ENCODE measurements at regions of chr17 and their contacts with region 1.

Region 1: DNA sequence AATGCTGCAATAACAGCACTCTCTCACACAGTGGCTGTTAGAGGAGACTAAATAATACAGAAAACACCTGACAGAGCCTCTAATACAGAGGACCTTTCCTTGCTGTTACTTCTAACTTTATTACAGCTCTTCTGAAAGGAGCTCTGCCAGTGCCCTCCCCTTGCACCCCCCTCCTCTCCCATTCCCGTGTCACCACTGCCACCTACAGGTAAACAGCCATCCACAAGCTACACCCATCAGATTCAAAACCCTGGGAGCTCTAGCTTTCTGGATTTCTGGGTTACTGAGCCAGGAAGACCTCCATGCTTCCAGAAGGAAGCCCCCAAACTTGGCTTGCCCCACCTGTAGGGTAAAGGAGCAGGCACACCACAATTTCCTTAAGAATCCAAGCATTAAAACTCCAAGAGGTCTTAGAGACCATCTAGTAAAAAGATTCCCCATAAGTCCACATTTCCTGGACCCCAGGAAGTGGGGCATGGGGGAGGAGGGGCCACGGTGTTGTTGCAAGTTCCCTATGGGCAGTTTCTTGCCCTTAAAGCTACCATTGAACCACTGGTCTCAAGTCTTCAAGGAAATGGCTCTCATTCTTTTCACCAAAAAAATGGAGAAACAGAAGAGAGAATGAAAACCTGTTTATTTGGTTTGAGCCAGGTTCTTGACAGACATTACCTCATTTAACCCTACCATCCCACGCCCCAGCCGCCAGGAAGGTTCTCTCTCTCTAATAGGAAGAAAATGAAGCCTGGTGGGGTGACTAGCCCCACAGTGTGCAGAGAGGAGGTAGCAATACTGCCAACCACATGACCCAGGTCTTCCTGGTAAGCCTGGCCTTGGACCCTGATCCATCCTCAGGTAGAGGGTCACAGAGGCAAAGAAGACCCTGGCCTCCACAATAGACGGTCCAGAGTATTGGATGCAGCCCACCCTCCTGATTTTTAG is 52.8 kb downstream of the TOM1L2 start:
- H3K4me3 ChIP-seq: no peak overlapping the region
- H3K27ac ChIP-seq: peak overlapping the region; percentile 35; the same call in 1 of the 2 replicates
- H3K4me1 ChIP-seq: peaks cover 34% of the 10 kb centered on the region
- CTCF ChIP-seq: peak; percentile 85

Region 2: DNA sequence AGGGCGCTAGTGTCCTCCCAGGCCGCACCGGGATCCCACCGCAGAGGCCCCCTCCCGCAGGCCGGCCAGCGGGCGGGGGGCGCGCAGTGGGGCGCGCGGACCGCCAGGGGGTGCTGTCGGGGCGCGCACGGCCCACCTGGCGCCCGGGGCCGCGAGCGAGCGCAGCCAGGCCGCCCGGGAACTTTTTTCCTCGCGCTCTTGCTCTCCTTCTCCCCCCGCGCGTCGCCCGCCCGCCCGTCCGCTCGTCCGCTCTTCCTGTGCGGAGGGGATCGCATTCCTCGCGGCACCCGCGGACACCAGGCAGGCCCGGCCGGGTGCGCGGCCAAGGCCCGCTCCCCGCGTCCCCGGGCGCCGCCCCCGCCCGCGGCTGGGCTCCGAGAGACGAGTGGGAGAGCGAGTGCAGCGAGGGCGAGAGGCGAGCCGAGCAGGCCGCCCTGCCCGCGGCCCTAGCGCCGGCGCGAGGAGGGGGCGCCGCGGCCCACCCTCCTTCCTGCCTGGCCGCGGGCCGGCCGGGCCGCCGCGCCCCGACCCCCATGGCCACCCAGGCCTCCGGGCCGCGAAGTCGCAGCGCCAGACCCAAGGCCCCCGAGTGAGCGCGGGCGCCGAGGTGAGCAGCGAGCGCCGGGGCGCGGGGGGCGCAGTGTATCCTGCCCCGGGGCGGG is 238.1 kb before region 1 on chr17 and contains the start of gene RAI1:
- CTCF ChIA-PET with region 1: interaction called, 16 read pairs
- POLR2A ChIA-PET with region 1: no interaction called
- H3K4me3 ChIP-seq: peak within 1 kb of the TSS; percentile 76
- H3K27ac ChIP-seq: peak within 1 kb of the TSS; percentile 96
- H3K4me1 ChIP-seq: peaks cover 25% of the 10 kb centered on the region
- CTCF ChIP-seq: no peak

Region 3: GRCh38 chr17:17712268-17712924 is 207.0 kb before region 1 on chr17:
- CTCF ChIA-PET with region 1: no interaction called
- POLR2A ChIA-PET with region 1: no interaction called
- H3K4me3 ChIP-seq: no peak overlapping the region
- H3K27ac ChIP-seq: peak overlapping the region; percentile 41; the same call in 1 of the 2 replicates
- H3K4me1 ChIP-seq: peaks cover 32% of the 10 kb centered on the region
- CTCF ChIP-seq: no peak

Region 4: DNA sequence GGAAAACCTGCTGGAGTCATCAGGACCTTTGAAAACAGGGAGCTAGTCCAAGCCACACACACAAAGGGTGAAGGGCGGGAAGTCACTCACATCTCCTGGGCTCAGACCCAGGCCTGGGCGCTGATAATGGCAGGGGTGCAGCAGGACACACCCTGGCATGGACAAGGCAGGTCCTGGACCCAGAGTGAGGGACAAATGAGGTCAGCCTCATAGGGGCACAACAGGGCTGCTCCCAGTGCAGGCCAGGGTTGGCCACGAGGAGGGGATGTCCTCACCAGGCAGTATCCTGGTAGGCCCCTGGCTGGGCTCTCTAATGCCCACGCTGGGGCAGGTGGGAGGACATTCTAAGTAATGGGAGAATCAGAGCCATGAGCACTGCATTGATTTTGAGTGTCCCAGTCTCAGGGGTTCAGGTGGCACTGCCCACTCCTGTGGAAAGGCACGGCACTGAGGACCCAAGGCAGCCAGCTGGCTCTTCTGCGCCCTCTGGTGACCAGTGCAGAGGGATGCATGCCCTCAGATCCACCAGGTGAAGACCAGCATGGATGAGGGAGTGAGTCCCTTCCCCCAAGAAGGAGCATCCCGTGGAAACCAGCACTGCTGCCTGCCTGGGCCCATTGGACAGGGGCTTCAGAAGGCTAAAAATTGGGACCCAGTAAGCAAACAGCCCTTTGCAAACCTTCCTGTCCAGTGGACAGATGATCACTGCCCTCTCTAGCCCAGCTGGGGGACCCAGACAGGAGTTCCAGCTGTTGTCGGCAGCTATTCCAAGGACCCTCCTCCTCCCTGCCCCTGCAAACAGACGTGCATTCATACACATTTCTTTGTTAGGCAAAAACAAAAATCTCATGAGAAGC is 59.3 kb before region 1 on chr17:
- CTCF ChIA-PET with region 1: interaction called, 40 read pairs
- POLR2A ChIA-PET with region 1: interaction called, 3 read pairs
- H3K4me3 ChIP-seq: no peak overlapping the region
- H3K27ac ChIP-seq: no peak overlapping the region
- H3K4me1 ChIP-seq: no peaks in the 10 kb centered on the region; the same call in 1 of the 2 replicates
- CTCF ChIP-seq: peak; percentile 97

Region 5: DNA sequence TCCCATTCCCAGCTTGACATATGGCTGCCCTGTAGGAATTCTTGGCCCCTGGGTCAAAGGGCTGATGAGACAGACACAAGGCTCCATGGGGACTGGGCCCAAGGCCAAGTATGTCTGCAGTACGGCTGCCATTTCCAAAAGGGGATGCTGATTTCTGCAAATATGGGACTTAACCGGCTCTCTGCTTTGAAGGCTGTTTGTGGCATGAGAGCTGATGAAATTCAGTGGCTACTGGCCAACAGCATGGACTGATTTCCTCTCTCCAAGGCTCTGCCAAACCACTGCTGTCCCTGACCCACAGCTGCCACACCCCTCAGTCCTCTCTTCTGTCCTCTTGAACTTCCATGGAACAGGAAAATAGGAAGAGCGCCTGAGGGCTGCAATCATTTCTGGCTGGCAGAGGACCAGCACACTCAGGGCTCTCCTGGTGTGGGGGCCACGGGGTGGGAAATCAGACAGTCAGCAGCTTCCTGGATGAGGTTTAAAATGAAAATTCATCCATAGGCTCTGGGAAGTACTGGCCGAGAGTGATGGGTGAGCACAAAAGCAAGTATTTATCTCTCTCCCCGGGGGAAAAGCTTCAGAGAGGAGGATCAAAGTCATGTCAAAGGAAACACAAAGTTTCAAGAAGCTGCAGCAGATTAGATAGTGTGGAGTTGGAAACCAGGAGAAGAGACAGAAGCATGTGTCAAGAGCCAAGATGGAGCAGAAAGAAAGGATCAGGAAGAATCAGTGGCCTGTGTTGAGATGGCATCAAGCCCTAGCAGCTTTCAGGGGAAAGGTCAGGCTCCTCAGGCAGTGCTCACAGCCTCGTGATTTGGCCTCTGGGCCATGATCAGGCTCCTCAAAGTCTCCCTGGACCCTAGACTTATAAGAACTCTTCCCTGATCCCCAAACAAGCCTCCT is 18.6 kb before region 1 on chr17:
- CTCF ChIA-PET with region 1: interaction called, 121 read pairs
- POLR2A ChIA-PET with region 1: interaction called, 8 read pairs
- H3K4me3 ChIP-seq: no peak overlapping the region
- H3K27ac ChIP-seq: 0 out of 2 replicates have a peak overlapping the region, but pooled peaks have one; percentile 14
- H3K4me1 ChIP-seq: 0 out of 2 replicates have a peak, but pooled peaks cover 5% of the 10 kb centered on the region
- CTCF ChIP-seq: no peak

Region 6: DNA sequence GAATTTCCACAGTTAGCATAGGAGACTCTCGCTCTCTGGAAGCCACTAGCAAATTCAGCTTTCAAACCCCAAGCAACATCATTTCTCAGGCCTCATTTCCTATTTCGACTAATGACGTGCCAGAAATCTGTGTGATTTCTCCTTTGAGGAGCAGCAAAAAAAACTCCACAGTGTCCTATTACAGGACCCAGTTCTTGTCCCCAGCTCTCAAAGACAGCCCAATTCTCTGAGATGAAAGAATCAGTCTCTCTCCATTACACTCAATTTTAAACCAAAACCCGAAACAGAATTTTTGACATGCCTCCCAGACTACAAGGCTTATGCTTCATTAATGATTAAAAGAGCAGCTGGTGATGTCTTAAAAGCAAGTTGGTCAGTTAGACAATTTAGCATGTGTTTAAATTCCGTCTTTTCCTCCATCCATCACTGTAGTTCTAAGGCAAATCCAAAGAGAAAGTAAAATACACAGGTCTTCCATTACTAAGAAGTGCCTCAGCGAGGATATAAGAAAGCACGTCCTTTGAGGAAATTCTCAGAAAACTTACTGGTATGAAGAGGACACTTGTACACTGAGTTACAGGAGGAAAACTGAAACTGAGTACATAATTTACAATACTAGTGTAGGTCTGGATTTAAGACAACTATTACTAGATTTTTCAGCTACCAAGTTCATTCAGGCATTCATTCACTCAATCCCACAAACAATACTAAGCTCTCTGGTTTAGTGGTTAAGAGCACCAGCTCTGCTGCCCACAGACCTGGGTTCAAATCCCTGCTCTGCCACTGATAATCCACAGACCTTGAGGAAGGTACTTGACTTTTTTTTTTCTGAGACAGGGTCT is 40.3 kb after region 1 on chr17:
- CTCF ChIA-PET with region 1: interaction called, 11 read pairs
- POLR2A ChIA-PET with region 1: interaction called, 5 read pairs
- H3K4me3 ChIP-seq: no peak overlapping the region
- H3K27ac ChIP-seq: peak overlapping the region; percentile 81
- H3K4me1 ChIP-seq: peaks cover 32% of the 10 kb centered on the region
- CTCF ChIP-seq: no peak

Region 7: DNA sequence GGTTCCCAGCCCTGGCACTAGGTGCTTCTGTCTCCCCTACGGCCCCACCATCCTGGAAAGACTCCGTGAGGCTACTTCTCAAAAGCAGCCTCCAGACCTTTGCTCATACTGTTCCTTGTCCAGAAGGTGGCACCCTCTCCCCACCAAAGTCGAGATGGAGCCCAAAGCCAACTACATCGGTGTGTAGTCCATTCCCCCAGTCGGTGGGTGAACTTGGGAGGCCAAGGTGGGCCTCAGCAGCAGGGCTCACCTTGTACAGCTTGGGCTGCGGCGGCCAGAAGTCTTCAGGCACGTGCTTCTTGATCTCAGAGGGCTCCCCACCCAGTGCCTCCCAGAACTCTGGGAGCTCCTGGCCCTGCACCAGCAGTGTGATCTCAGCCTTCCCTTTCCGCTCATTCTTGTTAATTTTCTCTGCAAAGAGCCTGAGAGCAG is 328.9 kb after region 1 on chr17:
- CTCF ChIA-PET with region 1: no interaction called
- POLR2A ChIA-PET with region 1: no interaction called
- H3K4me3 ChIP-seq: no peak overlapping the region
- H3K27ac ChIP-seq: no peak overlapping the region
- H3K4me1 ChIP-seq: no peaks in the 10 kb centered on the region
- CTCF ChIP-seq: peak; percentile 68

Measured in HEK293 (cell line).